Activated CD4-positive, alpha-beta memory T cell treated with anti-CD3 and anti-CD28 coated beads for 36 hours (primary cell): ENCODE measurements at regions of chr19 and their contacts with region 1.

Region 1: GRCh38 chr19:10388957-10389356 is 8.6 kb upstream of the TYK2 start:
- DNase-seq: peak; percentile 89
- H3K4me3 Mint-ChIP-seq: no peak overlapping the region
- H3K27ac Mint-ChIP-seq: no peak overlapping the region
- H3K4me1 Mint-ChIP-seq: peaks cover 7% of the 10 kb centered on the region
- H3K27me3 Mint-ChIP-seq: no peaks in the 10 kb centered on the region

Region 2: DNA sequence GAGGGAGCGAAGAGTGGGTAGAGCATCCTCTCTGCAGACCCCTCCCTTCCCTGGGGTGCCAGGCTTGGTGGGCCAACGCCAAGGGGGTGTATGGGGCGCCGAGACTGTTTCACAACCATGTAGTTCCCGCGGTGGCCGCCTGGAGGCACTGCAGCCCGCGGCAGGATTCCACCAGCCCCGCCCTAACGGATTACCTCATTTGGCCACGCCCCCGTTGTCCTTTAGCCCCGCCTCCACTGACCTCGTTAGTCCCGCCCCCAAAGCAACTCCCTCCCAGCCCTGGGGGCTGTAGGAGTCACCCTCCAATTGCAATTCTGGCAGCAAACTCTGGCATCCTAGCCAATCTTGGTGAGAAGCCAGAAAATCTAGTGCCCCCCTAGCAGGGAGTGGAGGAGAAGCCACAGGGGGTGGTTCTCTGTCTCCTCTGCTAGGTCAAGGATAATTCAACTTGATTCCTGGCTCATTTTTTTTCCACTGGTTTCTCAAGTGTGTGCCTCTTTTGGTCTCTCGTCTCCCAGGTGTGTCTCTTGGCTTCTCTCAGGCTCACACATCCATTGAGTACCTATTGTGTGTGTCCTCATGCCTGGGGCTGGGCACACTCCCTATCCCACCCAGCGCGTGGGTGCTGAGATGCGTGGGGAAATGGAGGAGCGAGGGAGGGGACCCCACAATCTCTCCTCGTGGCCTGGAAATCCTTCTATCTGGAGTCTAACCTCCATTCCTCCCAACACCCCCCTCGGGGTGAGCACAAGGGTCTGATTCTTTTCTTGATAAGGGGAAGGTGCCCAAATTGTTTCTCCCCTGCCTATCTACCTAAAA is 454.6 kb before region 1 on chr19:
- CTCF ChIA-PET with region 1: interaction called, 7 read pairs
- POLR2A ChIA-PET with region 1: no interaction called
- intact Hi-C with region 1: loop called (anchors 5 kb)
- DNase-seq: peak; percentile 90
- H3K4me3 Mint-ChIP-seq: no peak overlapping the region
- H3K27ac Mint-ChIP-seq: no peak overlapping the region
- H3K4me1 Mint-ChIP-seq: peaks cover 28% of the 10 kb centered on the region
- H3K27me3 Mint-ChIP-seq: peaks cover 46% of the 10 kb centered on the region

Region 3: DNA sequence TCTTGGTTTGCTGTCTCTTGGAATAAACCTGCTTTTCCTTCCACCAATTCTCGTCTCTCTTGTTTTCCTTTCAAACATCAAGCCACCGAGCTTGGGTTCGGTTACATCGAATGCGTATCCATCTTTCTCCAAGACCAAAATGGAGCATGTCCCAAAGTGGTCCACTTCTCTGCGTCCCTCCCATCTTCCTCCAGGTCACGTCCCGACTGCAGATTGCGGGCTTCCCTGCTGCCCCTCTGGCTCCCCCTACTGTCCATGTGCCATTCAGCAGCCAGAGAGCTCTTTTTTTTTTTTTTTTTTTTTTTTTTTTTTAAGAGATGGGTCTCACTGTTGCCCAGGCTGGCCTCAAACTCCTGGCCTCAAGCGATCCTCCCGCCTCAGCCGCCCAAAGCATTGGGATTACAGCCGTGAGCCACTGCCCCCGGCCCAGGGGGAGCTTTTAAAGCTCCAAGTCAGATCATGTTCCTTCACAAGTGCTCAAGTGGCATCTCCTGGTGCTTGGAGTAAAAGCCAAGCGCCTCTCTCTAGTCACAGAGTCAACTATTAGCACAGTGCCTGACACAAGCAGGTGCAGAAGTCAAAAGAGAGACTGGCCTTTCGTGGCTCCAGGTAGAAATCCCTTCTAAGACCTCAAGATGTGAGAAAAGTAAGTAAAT is 388.7 kb before region 1 on chr19:
- CTCF ChIA-PET with region 1: no interaction called
- POLR2A ChIA-PET with region 1: no interaction called
- intact Hi-C with region 1: no loop called
- DNase-seq: peak; percentile 77
- H3K4me3 Mint-ChIP-seq: no peak overlapping the region
- H3K27ac Mint-ChIP-seq: no peak overlapping the region
- H3K4me1 Mint-ChIP-seq: peaks cover 8% of the 10 kb centered on the region
- H3K27me3 Mint-ChIP-seq: peaks cover 24% of the 10 kb centered on the region

Region 4: DNA sequence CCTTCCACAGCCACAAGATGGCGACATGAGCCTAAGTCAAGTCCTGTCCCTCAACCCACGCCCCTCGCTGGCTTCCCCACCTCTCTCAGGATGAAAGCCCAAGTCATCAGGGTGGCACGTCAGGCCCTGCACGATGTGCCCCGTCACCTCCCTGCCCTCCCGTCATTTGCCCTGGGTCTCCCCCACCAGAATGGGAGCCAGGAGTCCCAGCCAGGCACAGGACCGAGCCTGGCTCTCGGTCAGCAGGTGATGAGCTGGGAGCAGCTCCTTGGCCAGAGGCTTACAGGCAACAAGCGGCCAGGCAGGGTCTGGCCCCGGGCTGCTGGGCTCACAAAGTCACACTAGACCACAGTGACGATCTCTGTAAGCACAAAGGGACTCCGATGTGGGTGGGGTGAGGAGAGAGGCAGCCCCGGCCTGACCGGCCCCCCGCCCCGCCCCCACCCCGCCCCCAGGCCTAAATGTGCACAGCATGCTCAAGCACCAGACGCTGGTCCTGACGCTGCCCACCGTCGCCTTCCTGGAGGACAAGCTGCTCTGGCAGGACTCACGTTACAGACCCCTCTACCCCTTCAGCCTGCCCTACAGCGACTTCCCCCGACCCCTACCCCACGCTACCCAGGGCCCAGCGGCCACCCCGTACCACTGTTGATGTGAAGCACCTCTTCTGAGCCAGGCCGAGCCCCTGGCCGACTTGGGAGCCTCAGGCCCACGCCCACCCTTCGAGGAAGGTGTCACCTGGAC is 129.6 kb before region 1 on chr19:
- CTCF ChIA-PET with region 1: interaction called, 189 read pairs
- POLR2A ChIA-PET with region 1: interaction called, 13 read pairs
- intact Hi-C with region 1: loop called (anchors 1 kb)
- DNase-seq: peak; percentile 98
- H3K4me3 Mint-ChIP-seq: no peak overlapping the region
- H3K27ac Mint-ChIP-seq: peak overlapping the region; percentile 93
- H3K4me1 Mint-ChIP-seq: peaks cover 26% of the 10 kb centered on the region
- H3K27me3 Mint-ChIP-seq: no peaks in the 10 kb centered on the region

Region 5: GRCh38 chr19:10286803-10287737 is 101.9 kb before region 1 on chr19 and contains the start of gene ICAM4:
- CTCF ChIA-PET with region 1: interaction called, 13 read pairs
- POLR2A ChIA-PET with region 1: interaction called, 3 read pairs
- intact Hi-C with region 1: no loop called
- DNase-seq: peak; percentile 55
- H3K4me3 Mint-ChIP-seq: no peak within 1 kb of the TSS
- H3K27ac Mint-ChIP-seq: no peak within 1 kb of the TSS
- H3K4me1 Mint-ChIP-seq: peaks cover 56% of the 10 kb centered on the region
- H3K27me3 Mint-ChIP-seq: peaks cover 40% of the 10 kb centered on the region
- total RNA-seq, gene ICAM4: 0.34 to 0.59 TPM

Region 6: GRCh38 chr19:10292206-10292788 is 96.7 kb before region 1 on chr19:
- CTCF ChIA-PET with region 1: interaction called, 13 read pairs
- POLR2A ChIA-PET with region 1: interaction called, 3 read pairs
- intact Hi-C with region 1: no loop called
- DNase-seq: peak; percentile 87
- H3K4me3 Mint-ChIP-seq: peak overlapping the region; percentile 68
- H3K27ac Mint-ChIP-seq: no peak overlapping the region
- H3K4me1 Mint-ChIP-seq: peaks cover 61% of the 10 kb centered on the region
- H3K27me3 Mint-ChIP-seq: peaks cover 76% of the 10 kb centered on the region

Region 7: GRCh38 chr19:10332955-10333757 is 55.8 kb before region 1 on chr19 and contains the start of gene RAVER1:
- CTCF ChIA-PET with region 1: interaction called, 12 read pairs
- POLR2A ChIA-PET with region 1: interaction called, 4 read pairs
- intact Hi-C with region 1: no loop called
- DNase-seq: peak; percentile 99
- H3K4me3 Mint-ChIP-seq: peak within 1 kb of the TSS; percentile 95
- H3K27ac Mint-ChIP-seq: peak within 1 kb of the TSS; percentile 96
- H3K4me1 Mint-ChIP-seq: peaks cover 37% of the 10 kb centered on the region
- H3K27me3 Mint-ChIP-seq: no peaks in the 10 kb centered on the region
- total RNA-seq, gene RAVER1: 81.5 to 85.0 TPM